Kidney (tissue), 22 donors: ENCODE measurements at regions of chr17 and their contacts with region 1.

Region 1: DNA sequence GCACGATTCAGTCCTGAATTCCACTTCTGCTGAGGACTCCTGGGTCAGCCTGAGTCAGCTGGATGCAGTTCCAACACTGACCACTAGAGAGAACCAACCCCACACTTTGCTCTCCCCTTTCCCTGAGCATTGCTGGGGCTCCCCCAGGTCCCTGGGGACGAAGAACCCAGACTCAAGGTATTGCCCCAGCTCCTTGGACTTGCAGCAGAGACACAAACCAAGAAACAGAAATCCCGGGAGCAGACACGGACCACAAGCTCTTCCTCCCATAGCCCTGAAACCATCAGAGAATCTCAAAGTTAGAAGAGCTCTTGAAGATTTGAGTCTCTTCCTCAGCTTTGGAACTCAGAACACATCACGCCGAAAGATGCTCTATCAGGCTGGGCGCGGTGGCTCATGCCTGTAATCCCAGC is 678 bp upstream of the GH1 start:
- DNase-seq: peak in 4 of 5 donors; percentile 47 to 67 (median 56)
- H3K4me3 ChIP-seq: no peak overlapping the region
- H3K27ac ChIP-seq: no peak overlapping the region
- H3K4me1 ChIP-seq: no peaks in the 10 kb centered on the region
- H3K27me3 ChIP-seq: no peaks in the 10 kb centered on the region
- CTCF ChIP-seq: peak; percentile 93

Region 2: GRCh38 chr17:64016231-64016784 is 97.0 kb after region 1 on chr17:
- intact Hi-C with region 1: loop called (anchors 10 kb)
- DNase-seq: no peak
- H3K4me3 ChIP-seq: peak overlapping the region in 1 of 3 donors; percentile 29
- H3K27ac ChIP-seq: peak overlapping the region; percentile 13 to 36
- H3K4me1 ChIP-seq: peaks cover 0 to 4% (median 0%) of the 10 kb centered on the region in 3 donors
- H3K27me3 ChIP-seq: no peaks in the 10 kb centered on the region
- CTCF ChIP-seq: no peak